ENCODE measurements at regions of chr19 and their contacts with region 1.

Region 1: GRCh38 chr19:4867534-4868285 is at the start of gene PLIN3:
- DNase-seq: peak; percentile 86
- H3K4me3 Mint-ChIP-seq: peak within 1 kb of the TSS; percentile 85
- H3K27ac Mint-ChIP-seq: peak within 1 kb of the TSS; percentile 55
- H3K4me1 Mint-ChIP-seq: peaks cover 31% of the 10 kb centered on the region
- H3K27me3 Mint-ChIP-seq: peaks cover 6% of the 10 kb centered on the region
- total RNA-seq, gene PLIN3: 33.1 and 33.2 TPM in 2 replicates

Region 2: DNA sequence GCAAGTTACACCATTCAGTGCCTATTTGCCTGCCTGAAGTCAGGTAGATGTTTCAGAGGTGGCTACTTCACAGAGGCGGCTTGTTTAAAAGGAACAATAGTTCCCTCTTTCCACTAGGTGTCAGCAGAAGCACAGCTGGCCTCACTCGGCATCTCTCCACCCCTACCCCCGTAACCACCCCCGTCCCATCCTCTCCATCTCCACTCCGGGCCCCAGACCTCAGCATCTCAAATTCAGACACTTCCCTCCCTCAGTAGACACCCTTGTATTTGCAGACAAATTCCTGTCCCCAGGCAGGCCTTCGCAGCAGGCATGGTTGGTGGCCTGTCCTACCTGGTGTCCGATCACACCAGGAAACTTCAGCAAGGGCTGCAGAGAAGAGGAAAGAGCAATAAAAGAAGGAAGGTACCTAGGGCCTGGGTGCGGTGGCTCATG is 135.0 kb before region 1 on chr19:
- intact Hi-C with region 1: loop called (anchors 5 kb)
- DNase-seq: peak; percentile 47
- H3K4me3 Mint-ChIP-seq: peak overlapping the region; percentile 13
- H3K27ac Mint-ChIP-seq: no peak overlapping the region
- H3K4me1 Mint-ChIP-seq: peaks cover 15% of the 10 kb centered on the region
- H3K27me3 Mint-ChIP-seq: peaks cover 7% of the 10 kb centered on the region

Region 3: DNA sequence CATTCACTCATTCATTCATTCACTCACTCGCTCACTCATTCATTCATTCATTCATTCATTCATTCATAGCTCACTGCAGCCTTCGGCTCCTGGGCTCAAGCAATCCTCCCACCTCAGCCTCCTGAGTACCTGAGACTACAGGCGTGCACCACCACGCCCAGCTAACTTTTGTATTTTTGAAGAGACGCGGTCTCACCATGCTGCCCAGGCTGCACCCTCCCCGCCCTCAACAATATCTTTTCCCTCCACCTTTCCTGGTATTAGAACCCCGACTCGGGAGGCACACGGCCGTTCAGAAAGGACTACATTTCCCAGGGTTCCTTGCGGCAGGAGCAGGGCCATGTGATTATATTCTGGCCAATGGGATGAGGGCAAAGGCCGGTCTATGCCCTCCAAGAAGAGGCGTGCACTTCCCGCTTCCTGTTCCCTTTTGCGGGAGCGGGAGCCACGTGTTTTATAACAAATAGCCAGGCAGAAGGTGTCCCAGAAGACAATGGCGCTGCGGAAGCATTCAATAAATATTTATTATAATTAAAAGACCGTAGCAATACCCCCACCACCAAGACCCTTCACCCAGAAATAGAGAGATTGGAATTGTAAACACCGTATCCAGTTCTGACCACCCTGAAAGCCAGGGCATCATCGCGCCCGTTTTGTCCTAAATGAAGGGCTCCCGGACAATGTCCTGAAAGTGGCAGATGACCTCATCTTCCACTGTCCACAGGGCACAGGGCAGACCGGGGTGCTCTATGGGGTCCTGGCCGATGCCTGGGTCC is 52.1 kb before region 1 on chr19:
- intact Hi-C with region 1: loop called (anchors 1 kb)
- DNase-seq: peak; percentile 66
- H3K4me3 Mint-ChIP-seq: peak overlapping the region; percentile 63
- H3K27ac Mint-ChIP-seq: peak overlapping the region; percentile 67
- H3K4me1 Mint-ChIP-seq: peaks cover 24% of the 10 kb centered on the region
- H3K27me3 Mint-ChIP-seq: no peaks in the 10 kb centered on the region

Region 4: GRCh38 chr19:4909897-4910593 is 42.3 kb after region 1 on chr19:
- intact Hi-C with region 1: loop called (anchors 1 kb)
- DNase-seq: peak; percentile 92
- H3K4me3 Mint-ChIP-seq: peak overlapping the region; percentile 89
- H3K27ac Mint-ChIP-seq: peak overlapping the region; percentile 84
- H3K4me1 Mint-ChIP-seq: peaks cover 36% of the 10 kb centered on the region
- H3K27me3 Mint-ChIP-seq: no peaks in the 10 kb centered on the region

Region 5: DNA sequence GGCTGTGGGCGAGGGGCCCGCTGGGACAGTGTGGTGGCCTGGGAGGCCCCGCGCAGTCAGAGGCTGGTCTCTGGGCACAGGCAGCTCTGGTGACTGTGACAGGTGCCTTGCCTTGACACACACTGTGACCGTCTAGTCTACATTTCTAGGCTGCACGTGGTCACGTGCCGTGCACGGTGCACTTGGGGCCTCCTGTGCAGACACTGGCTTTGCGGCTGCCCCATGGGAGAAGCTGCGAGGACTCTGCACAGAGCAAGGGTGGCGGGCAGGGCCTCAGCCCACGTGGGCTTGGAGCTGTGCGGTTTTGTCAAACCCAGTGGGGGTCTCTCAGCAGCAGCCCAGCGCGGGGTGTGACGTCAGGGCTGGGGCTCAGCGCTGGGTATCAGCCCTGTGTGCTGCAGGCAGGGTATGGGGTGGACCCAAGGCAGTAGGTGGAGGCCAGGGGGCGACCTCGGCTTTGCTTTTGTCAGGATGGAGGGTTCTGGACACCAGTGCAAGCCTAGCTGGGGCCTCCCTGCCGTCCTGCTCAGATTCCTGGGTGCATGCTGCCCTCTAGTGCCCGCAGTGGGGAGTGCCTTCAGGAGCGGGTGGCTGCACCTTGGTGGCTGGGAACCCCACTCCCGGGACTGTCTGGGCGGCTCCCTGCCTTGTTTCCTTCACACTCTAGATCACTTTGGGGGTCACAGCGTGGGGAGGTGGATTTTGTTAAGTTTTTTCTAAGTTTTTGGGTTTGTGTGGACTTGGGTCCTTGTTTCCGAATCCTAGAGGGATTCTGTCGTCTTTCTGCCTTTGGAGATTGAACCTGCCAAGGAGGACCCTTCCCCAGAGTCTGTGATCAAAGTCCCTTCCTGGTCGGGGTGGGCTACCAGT is 163.8 kb after region 1 on chr19:
- intact Hi-C with region 1: loop called (anchors 1 kb)
- DNase-seq: peak; percentile 69
- H3K4me3 Mint-ChIP-seq: no peak overlapping the region
- H3K27ac Mint-ChIP-seq: no peak overlapping the region
- H3K4me1 Mint-ChIP-seq: no peaks in the 10 kb centered on the region
- H3K27me3 Mint-ChIP-seq: no peaks in the 10 kb centered on the region